A673 (cell line): ENCODE measurements at regions of chr11 and their contacts with region 1.

Region 1: DNA sequence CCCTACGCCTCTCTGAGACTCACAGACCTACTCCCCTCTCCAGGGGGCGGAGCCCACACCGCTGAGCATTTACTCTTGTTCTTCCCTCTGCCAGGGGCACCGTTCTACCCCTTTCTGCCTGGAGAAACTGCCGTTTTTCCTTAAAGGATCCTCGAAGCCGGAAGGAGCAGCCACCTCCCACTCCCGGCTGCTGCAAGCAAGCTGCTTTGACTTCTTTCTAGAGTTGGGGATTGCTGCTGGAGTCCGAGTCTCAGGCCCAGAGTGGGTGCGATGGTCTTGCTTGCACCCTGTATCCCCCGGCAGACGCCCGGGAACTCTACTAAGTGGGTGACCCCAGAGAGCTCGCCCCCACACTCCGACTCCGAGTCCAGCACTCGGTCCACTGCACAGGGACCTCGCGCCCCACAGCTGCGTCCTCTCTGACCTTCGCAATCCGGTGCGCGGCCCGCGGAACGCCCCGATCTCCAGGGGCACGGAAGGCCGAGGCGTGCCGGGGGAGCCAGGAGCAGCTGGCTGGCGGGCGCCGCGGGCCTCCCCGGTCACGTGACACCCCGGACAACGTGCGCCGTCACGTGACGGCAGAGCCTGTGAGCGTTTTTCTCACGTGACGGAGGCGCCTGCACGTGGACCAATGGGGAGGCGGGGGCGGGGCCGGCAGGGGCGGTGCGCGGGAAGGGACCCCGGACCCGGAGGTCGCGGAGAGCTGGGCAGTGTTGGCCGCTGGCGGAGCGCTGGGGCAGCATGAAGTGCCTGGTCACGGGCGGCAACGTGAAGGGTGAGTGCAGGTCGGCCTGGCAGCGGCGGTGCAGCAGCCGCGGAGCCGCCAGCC is at the start of gene RAD9A:
- DNase-seq: peak; percentile 99
- H3K4me3 ChIP-seq: peak within 1 kb of the TSS; percentile 77
- H3K27ac ChIP-seq: peak within 1 kb of the TSS; percentile 89
- H3K4me1 ChIP-seq: peaks cover 9% of the 10 kb centered on the region
- H3K27me3 ChIP-seq: no peaks in the 10 kb centered on the region
- CTCF ChIP-seq: no peak
- total RNA-seq, gene RAD9A: 43.0 and 55.0 TPM in 2 replicates

Region 2: GRCh38 chr11:67353317-67354074 is 38.0 kb before region 1 on chr11 and contains the start of gene POLD4:
- CTCF ChIA-PET with region 1: interaction called, 10 read pairs
- POLR2A ChIA-PET with region 1: no interaction called
- intact Hi-C with region 1: no loop called
- DNase-seq: peak; percentile 98
- H3K4me3 ChIP-seq: peak within 1 kb of the TSS; percentile 90
- H3K27ac ChIP-seq: peak within 1 kb of the TSS; percentile 91
- H3K4me1 ChIP-seq: peaks cover 25% of the 10 kb centered on the region
- H3K27me3 ChIP-seq: no peaks in the 10 kb centered on the region
- CTCF ChIP-seq: no peak
- total RNA-seq, gene POLD4: 13.2 and 14.3 TPM in 2 replicates

Region 3: GRCh38 chr11:67373925-67374618 is 17.4 kb before region 1 on chr11:
- CTCF ChIA-PET with region 1: no interaction called
- POLR2A ChIA-PET with region 1: interaction called, 14 read pairs
- intact Hi-C with region 1: no loop called
- DNase-seq: peak; percentile 57
- H3K4me3 ChIP-seq: peak overlapping the region; percentile 74
- H3K27ac ChIP-seq: no peak overlapping the region
- H3K4me1 ChIP-seq: peaks cover 36% of the 10 kb centered on the region
- H3K27me3 ChIP-seq: no peaks in the 10 kb centered on the region
- CTCF ChIP-seq: peak; percentile 35; the same call in 1 of the 2 replicates

Region 4: GRCh38 chr11:67507864-67508485 is 116.5 kb after region 1 on chr11 and contains the start of gene CDK2AP2:
- CTCF ChIA-PET with region 1: no interaction called
- POLR2A ChIA-PET with region 1: no interaction called
- intact Hi-C with region 1: loop called (anchors 5 kb)
- DNase-seq: peak; percentile 100
- H3K4me3 ChIP-seq: peak within 1 kb of the TSS; percentile 70
- H3K27ac ChIP-seq: peak within 1 kb of the TSS; percentile 92
- H3K4me1 ChIP-seq: peaks cover 34% of the 10 kb centered on the region
- H3K27me3 ChIP-seq: no peaks in the 10 kb centered on the region
- CTCF ChIP-seq: no peak
- total RNA-seq, gene CDK2AP2: 48.1 and 51.3 TPM in 2 replicates

Region 5: DNA sequence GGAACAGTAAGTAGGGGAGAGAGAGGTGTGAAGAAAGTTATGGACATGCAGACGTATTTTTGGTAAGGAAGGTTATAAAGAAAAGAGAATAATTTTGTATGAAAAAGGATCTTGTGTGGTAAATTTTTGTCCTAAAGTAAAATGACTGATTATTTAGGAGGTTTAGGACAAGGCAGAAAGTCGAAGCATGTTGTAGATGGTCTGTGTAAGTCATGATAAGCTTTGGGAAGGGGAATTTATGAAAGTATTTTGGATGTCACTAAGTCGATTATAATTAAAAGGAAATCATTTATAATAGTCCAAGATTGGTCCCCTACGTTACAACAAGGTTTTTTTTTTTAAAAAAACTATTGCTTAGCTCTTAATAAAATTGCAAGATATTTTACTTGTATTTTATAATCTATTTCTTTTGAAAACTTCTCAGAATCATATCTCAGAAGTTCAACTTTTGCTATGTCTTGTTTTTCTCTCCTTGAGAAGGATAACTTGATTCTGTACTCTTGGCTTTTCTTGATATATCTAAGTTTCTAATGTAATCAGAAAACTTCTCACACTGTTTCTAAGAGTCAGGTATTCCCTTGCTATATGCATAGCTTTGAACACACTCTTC is 142.7 kb after region 1 on chr11:
- CTCF ChIA-PET with region 1: no interaction called
- POLR2A ChIA-PET with region 1: no interaction called
- intact Hi-C with region 1: no loop called
- DNase-seq: no peak
- H3K4me3 ChIP-seq: no peak overlapping the region
- H3K27ac ChIP-seq: no peak overlapping the region
- H3K4me1 ChIP-seq: no peaks in the 10 kb centered on the region
- H3K27me3 ChIP-seq: no peaks in the 10 kb centered on the region
- CTCF ChIP-seq: no peak

Region 6: GRCh38 chr11:67648140-67649123 is 256.9 kb after region 1 on chr11:
- CTCF ChIA-PET with region 1: no interaction called
- POLR2A ChIA-PET with region 1: no interaction called
- intact Hi-C with region 1: no loop called
- DNase-seq: peak; percentile 52
- H3K4me3 ChIP-seq: no peak overlapping the region
- H3K27ac ChIP-seq: peak overlapping the region; percentile 43
- H3K4me1 ChIP-seq: peaks cover 19% of the 10 kb centered on the region
- H3K27me3 ChIP-seq: no peaks in the 10 kb centered on the region
- CTCF ChIP-seq: peak; percentile 55